H1 (cell line): ENCODE measurements at regions of chr10 and their contacts with region 1.

Region 1: GRCh38 chr10:61750929-61751471 is 88.3 kb downstream of the CABCOCO1 start:
- DNase-seq: peak; percentile 44 to 79
- H3K4me3 ChIP-seq: no peak overlapping the region
- H3K27ac ChIP-seq: no peak overlapping the region
- H3K4me1 ChIP-seq: peaks cover 0 to 3% (median 0%) of the 10 kb centered on the region in 4 experiments; a peak in 1 of 7 replicates
- H3K27me3 ChIP-seq: no peaks in the 10 kb centered on the region
- CTCF ChIP-seq: peak; percentile 80 to 96 (median 94)
- EP300 ChIP-seq: no peak
- POLR2A ChIP-seq: no peak
- RAD21 ChIP-seq: peak; percentile 70 to 75

Region 2: GRCh38 chr10:61733358-61733940 is 17.6 kb before region 1 on chr10:
- CTCF ChIA-PET with region 1: interaction called, 49 read pairs
- POLR2A ChIA-PET with region 1: no interaction called
- DNase-seq: no peak
- H3K4me3 ChIP-seq: no peak overlapping the region
- H3K27ac ChIP-seq: no peak overlapping the region
- H3K4me1 ChIP-seq: no peaks in the 10 kb centered on the region
- H3K27me3 ChIP-seq: no peaks in the 10 kb centered on the region
- CTCF ChIP-seq: peak in 2 of 3 experiments; percentile 46 to 61; a peak in 2 of 4 replicates
- EP300 ChIP-seq: no peak
- POLR2A ChIP-seq: no peak
- RAD21 ChIP-seq: peak; percentile 76 to 79

Region 3: DNA sequence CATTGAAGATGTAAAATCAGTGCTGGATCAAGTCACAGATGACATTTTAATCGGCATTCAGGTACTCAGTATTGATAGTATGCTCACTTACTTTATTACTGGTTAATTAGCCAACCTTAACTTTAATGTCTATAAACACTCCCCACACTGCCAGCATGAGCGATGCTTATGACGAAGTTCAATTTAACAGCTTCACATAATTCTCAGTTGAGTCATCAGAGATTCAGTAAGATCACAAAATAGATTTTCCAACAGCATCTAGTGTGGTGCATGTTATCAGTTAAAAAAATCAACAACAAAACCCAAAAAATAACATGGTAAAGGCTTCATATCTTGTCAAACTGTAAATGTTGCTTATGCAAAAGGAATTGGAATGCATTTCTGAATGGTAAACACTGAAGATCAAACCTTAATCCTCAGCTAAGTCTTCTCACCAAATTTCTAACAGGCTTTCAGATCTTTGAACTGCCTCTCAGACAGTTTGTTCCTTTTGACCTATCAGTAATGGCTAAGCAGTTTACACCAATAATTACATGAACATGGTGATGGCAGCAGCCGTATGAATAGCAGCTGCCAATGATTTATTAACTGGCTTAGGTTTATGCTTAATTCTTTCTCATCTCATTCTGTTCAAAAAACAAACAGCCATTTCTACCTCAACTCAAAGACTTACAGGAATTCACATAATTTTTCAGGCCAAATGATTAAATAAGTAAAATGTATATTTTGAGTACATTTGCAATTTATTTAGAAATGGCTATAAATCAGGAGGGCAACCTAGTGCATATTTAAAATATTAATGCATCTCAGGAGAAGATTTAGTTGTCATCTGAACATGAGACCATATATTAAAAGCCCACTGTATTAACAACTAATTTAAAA is 10.2 kb after region 1 on chr10:
- CTCF ChIA-PET with region 1: interaction called, 23 read pairs
- POLR2A ChIA-PET with region 1: no interaction called
- DNase-seq: no peak
- H3K4me3 ChIP-seq: no peak overlapping the region
- H3K27ac ChIP-seq: no peak overlapping the region
- H3K4me1 ChIP-seq: peaks cover 0 to under 1% (median 0%) of the 10 kb centered on the region in 4 experiments; a peak in 1 of 7 replicates
- H3K27me3 ChIP-seq: no peaks in the 10 kb centered on the region
- CTCF ChIP-seq: no peak
- EP300 ChIP-seq: no peak
- POLR2A ChIP-seq: no peak
- RAD21 ChIP-seq: no peak

Region 4: DNA sequence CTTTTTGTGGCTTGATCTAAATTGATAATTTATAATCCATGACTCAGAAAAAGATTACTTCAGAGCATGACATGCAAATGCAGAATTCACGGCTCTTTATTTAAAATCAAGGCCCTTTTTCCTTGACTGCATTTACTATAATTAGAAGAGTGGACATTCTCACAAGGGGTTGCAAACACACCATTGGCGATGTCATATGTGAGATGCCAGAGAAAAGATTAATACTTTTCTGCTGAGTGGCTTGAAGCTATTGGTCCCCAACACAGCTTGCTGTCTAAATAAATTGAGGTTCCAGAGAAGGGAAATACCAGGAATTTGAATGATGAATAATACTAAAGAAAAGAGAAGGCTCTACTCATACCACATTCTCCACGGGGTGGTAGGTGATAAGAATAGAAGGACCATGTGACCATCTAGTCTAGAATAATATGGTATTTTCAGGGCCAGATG is 71.8 kb after region 1 on chr10:
- CTCF ChIA-PET with region 1: interaction called, 29 read pairs
- POLR2A ChIA-PET with region 1: no interaction called
- DNase-seq: no peak
- H3K4me3 ChIP-seq: no peak overlapping the region
- H3K27ac ChIP-seq: no peak overlapping the region
- H3K4me1 ChIP-seq: no peaks in the 10 kb centered on the region
- H3K27me3 ChIP-seq: peaks cover 0 to 1% (median 0%) of the 10 kb centered on the region in 4 experiments; a peak in 4 of 7 replicates
- CTCF ChIP-seq: no peak
- EP300 ChIP-seq: no peak
- POLR2A ChIP-seq: no peak
- RAD21 ChIP-seq: no peak

Region 5: GRCh38 chr10:61828034-61828433 is 77.0 kb after region 1 on chr10:
- CTCF ChIA-PET with region 1: interaction called, 120 read pairs
- POLR2A ChIA-PET with region 1: no interaction called
- DNase-seq: no peak
- H3K4me3 ChIP-seq: no peak overlapping the region
- H3K27ac ChIP-seq: no peak overlapping the region
- H3K4me1 ChIP-seq: no peaks in the 10 kb centered on the region
- H3K27me3 ChIP-seq: no peaks in the 10 kb centered on the region; a peak in 1 of 7 replicates
- CTCF ChIP-seq: no peak
- EP300 ChIP-seq: no peak
- POLR2A ChIP-seq: no peak
- RAD21 ChIP-seq: no peak

Region 6: GRCh38 chr10:61835069-61835945 is 84.3 kb after region 1 on chr10:
- CTCF ChIA-PET with region 1: interaction called, 120 read pairs
- POLR2A ChIA-PET with region 1: no interaction called
- DNase-seq: no peak
- H3K4me3 ChIP-seq: no peak overlapping the region
- H3K27ac ChIP-seq: no peak overlapping the region
- H3K4me1 ChIP-seq: 0 out of 7 replicates have a peak, but pooled peaks cover 0 to 3% (median 0%) of the 10 kb centered on the region in 4 experiments
- H3K27me3 ChIP-seq: no peaks in the 10 kb centered on the region
- CTCF ChIP-seq: peak in 2 of 3 experiments; percentile 62 to 68; a peak in 3 of 4 replicates
- EP300 ChIP-seq: no peak
- POLR2A ChIP-seq: no peak
- RAD21 ChIP-seq: peak; percentile 76 to 81